Panc1 (cell line): ENCODE measurements at regions of chr6 and their contacts with region 1.

Region 1: DNA sequence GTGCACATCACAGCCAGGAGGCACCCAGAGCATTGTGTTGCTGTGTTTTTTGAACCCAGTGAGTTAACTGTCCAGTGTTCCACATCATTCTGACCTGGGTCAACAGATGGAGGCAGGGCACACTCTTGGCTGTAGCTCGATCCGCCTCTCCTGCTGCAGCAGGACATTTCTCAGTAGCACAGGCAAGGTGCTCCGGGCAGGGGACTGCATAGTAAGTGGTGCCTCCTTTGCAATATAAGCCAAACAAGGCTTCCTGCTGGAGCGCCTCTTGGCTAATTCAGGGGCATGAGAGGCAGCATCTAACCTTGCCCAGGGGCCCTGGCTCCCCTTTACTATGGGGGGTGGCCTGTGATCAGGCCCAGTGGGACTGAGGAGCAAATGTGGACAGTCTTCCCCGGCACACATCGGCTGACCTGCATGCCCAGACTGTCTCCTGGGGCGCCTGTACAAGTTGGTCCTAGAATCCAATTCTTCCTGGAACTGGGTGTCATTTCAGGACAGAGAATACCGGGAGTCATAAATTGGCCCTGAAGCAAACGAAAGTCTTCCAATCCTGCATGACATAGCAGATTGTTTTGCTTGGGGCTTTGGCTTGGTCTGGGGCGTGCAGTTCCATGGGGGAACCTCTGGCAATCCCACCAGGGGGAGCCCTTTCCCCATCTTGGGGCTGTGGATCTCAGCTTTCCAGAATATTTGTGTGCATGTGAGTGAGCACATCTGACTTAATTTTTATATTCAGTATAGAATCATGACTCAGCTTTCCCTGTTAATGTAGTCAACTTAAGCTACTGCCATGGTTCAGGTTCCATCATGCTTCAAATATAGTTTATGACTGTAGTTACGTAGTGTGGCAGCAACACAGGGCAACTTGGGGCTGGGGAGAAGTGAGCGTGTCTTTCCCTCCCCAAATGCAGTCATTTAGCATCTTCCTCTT is 56.0 kb upstream of the DDR1 start:
- DNase-seq: no peak
- ATAC-seq: peak; percentile 95
- H3K4me3 ChIP-seq: peak overlapping the region in 1 of 2 experiments; percentile 29; a peak in 2 of 4 replicates
- H3K27ac ChIP-seq: peak overlapping the region; percentile 85
- H3K4me1 ChIP-seq: peaks cover 28% of the 10 kb centered on the region
- H3K27me3 ChIP-seq: no peaks in the 10 kb centered on the region
- CTCF ChIP-seq: peak; percentile 95

Region 2: GRCh38 chr6:30154709-30155519 is 673.4 kb before region 1 on chr6:
- CTCF ChIA-PET with region 1: no interaction called
- POLR2A ChIA-PET with region 1: no interaction called
- in situ Hi-C with region 1: no loop called
- intact Hi-C with region 1: no loop called
- DNase-seq: no peak
- ATAC-seq: peak; percentile 63; the same call in 1 of the 2 replicates
- H3K4me3 ChIP-seq: no peak overlapping the region
- H3K27ac ChIP-seq: no peak overlapping the region
- H3K4me1 ChIP-seq: no peaks in the 10 kb centered on the region
- H3K27me3 ChIP-seq: peaks cover 14% of the 10 kb centered on the region
- CTCF ChIP-seq: no peak

Region 3: DNA sequence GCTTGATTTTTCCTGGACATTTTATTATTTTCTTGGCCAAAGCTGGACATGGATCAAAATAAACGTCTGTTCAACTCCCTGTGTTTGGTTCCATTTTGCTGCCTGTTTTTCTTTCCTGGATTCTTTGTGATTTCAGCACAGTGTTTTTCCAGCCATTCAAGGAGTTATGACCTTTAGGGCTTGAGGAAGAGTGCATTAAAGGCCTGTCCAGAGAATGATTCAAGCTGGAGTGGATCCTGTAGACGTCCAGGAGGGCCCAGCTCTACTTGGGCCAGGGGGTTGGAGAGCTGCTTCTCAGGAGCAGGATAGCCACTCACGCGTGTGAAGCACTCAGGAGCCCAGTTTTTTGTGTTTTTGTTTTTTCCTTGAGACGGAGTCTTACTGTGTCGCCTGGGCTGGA is 27.4 kb before region 1 on chr6:
- CTCF ChIA-PET with region 1: no interaction called
- POLR2A ChIA-PET with region 1: no interaction called
- in situ Hi-C with region 1: no loop called
- intact Hi-C with region 1: no loop called
- DNase-seq: no peak
- ATAC-seq: no peak
- H3K4me3 ChIP-seq: no peak overlapping the region
- H3K27ac ChIP-seq: peak overlapping the region; percentile 36; the same call in 1 of the 2 replicates
- H3K4me1 ChIP-seq: peaks cover 2% of the 10 kb centered on the region; the same call in 1 of the 2 replicates
- H3K27me3 ChIP-seq: no peaks in the 10 kb centered on the region
- CTCF ChIP-seq: no peak

Region 4: DNA sequence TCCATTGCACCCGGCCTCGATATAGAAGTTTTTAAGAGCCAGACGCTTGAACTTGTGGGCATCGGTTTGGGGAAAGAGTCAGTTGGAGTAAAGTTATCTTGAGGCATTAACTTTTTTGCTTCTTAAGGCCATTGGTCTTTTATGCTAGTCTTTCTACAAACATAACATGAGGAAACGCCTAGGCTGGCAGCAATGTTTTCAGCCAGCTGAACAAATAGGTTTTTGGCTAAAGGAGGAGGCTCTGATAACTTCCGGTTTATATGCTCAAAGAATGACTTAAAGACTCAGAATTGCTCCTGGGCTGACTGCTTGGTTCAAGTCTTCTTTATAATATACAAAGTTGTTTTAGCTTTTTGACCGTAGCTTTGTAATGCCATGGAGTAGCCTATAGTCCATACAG is 397.4 kb after region 1 on chr6:
- CTCF ChIA-PET with region 1: no interaction called
- POLR2A ChIA-PET with region 1: no interaction called
- in situ Hi-C with region 1: no loop called
- intact Hi-C with region 1: no loop called
- DNase-seq: no peak
- ATAC-seq: no peak
- H3K4me3 ChIP-seq: no peak overlapping the region
- H3K27ac ChIP-seq: no peak overlapping the region
- H3K4me1 ChIP-seq: no peaks in the 10 kb centered on the region
- H3K27me3 ChIP-seq: no peaks in the 10 kb centered on the region; the same call in 1 of the 2 replicates
- CTCF ChIP-seq: no peak

Region 5: DNA sequence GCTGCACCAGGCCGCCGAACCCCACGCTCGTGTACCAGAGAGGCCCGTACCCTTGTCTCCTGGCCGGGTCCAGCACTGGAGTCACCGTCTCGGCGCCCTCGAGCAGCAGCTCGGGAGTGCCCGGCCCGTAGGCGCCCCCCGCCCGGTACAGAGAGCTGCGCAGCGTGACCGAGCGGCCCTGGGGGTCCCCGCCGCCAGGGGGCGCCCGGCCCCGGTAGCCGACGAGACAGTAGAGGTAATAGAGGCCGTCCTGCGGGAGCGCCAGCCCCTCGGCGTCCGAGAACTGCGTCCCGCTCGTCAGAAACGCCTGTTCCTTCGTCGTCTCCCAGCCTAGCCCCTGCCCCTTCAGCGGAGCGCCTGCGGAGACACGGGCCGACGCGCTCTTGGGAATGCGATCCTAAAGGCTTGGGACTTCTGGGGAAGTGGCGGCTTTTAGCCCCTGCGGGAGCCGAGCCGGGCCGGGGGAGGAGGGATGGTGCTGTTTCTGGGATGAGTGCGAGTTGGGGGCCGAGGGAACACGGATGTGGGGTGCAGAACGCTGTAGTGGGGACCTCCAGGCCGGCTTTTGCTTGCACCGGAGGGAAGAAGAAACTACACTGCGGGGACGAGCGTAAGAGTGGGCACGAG is 752.6 kb after region 1 on chr6:
- CTCF ChIA-PET with region 1: no interaction called
- POLR2A ChIA-PET with region 1: no interaction called
- in situ Hi-C with region 1: no loop called
- intact Hi-C with region 1: no loop called
- DNase-seq: no peak
- ATAC-seq: peak; percentile 92
- H3K4me3 ChIP-seq: peak overlapping the region; percentile 78 to 80
- H3K27ac ChIP-seq: peak overlapping the region; percentile 84
- H3K4me1 ChIP-seq: peaks cover 22% of the 10 kb centered on the region
- H3K27me3 ChIP-seq: no peaks in the 10 kb centered on the region
- CTCF ChIP-seq: peak; percentile 99

Region 6: GRCh38 chr6:31795616-31796298 is 967.5 kb after region 1 on chr6 and contains the start of gene VARS1:
- CTCF ChIA-PET with region 1: no interaction called
- POLR2A ChIA-PET with region 1: interaction called, 18 read pairs
- in situ Hi-C with region 1: no loop called
- intact Hi-C with region 1: no loop called
- DNase-seq: no peak
- ATAC-seq: peak; percentile 90
- H3K4me3 ChIP-seq: peak within 1 kb of the TSS; percentile 92 to 99
- H3K27ac ChIP-seq: peak within 1 kb of the TSS; percentile 99
- H3K4me1 ChIP-seq: peaks cover 21% of the 10 kb centered on the region
- H3K27me3 ChIP-seq: no peaks in the 10 kb centered on the region
- CTCF ChIP-seq: peak; percentile 91
- total RNA-seq, gene VARS1: 229 TPM